Sciatic nerve (tissue), 2 donors: ENCODE measurements at regions of chr22 and their contacts with region 1.

Region 1: DNA sequence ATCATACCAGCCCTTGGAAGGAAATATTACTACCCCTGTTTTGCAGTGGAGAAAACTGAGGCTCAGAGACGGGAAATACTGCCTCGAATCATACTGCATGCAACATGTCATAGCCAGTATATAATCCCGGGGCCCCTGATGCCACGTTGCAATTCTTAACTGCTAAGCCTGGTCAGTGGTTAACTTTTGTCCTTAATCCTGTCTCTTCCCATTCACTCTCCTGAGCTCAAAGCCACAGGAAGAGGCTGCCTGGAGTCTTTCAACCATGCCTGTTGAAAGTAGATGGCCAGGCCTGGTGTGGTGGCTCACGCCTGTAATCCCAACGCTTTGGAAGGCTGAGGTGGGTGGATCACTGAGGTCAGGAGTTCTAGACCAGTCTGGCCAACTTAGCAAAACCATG is 166.6 kb downstream of the MIAT start:
- DNase-seq: no peak
- ATAC-seq: no peak

Region 2: GRCh38 chr22:26777156-26777801 is 46.7 kb before region 1 on chr22:
- intact Hi-C with region 1: loop called (anchors 1 kb)
- DNase-seq: no peak
- ATAC-seq: peak; percentile 60

Region 3: GRCh38 chr22:26949193-26949592 is 125.2 kb after region 1 on chr22:
- intact Hi-C with region 1: no loop called
- DNase-seq: no peak
- ATAC-seq: no peak